Right ventricle myocardium inferior (tissue), 1 donor: ENCODE measurements at regions of chr18 and their contacts with region 1.

Region 1: GRCh38 chr18:67104700-67105284 is 411.7 kb downstream of the DSEL start:
- DNase-seq: no peak
- ATAC-seq: peak; percentile 50

Region 2: GRCh38 chr18:67199993-67200617 is 95.3 kb after region 1 on chr18:
- intact Hi-C with region 1: loop called (anchors 2 kb)
- DNase-seq: no peak
- ATAC-seq: no peak

Region 3: DNA sequence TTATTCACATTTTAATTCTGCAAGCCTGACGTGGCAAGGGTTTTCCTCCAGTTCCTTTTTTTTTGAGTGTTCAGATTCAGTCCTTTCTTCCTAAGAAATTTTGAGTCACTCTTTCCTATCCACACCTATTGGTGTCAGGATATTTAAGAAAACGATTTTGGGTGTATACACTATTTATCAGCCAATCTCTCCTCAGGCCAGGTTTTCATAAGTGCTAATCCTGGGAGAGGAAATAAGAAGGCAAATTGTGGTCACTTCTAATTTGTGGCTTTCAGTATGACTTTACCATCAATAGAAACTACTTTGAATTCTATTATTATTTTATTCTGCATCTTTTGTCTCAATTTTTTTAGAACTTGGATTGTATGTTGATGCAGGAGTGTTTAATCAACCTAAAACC is 237.4 kb after region 1 on chr18:
- intact Hi-C with region 1: no loop called
- DNase-seq: no peak
- ATAC-seq: no peak